ENCODE measurements at regions of chr14 and their contacts with region 1.

Region 1: DNA sequence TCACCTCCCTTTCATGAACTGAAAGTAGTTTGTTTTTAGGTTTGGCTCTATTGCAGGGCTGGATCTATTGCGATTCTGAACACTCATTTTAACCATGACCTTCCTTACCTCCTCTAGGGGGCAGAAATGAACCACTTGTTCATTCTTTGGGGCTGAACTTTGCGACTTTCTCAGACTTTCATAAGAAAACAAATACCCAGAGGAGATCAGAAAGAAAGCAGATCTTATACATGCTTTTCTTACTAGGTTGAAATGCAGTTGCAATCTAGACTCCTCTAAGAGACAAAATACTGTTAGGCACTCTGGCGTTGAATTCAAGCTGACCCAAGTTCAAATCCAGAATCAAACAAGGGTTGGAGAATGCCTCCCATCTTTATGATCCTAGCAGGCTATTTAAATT is 32.6 kb upstream of the PLEKHG3 start:
- DNase-seq: no peak
- ATAC-seq: peak; percentile 35 to 40
- H3K4me3 ChIP-seq: no peak overlapping the region
- H3K27ac ChIP-seq: no peak overlapping the region
- H3K4me1 ChIP-seq: no peaks in the 10 kb centered on the region
- H3K27me3 ChIP-seq: no peaks in the 10 kb centered on the region

Region 2: GRCh38 chr14:64510825-64511671 is 160.5 kb before region 1 on chr14:
- intact Hi-C with region 1: no loop called
- DNase-seq: peak in 2 of 3 donors; percentile 41 to 70
- ATAC-seq: peak in 1 of 2 donors; percentile 69
- H3K4me3 ChIP-seq: no peak overlapping the region
- H3K27ac ChIP-seq: no peak overlapping the region
- H3K4me1 ChIP-seq: peaks cover 2% of the 10 kb centered on the region
- H3K27me3 ChIP-seq: no peaks in the 10 kb centered on the region

Region 3: DNA sequence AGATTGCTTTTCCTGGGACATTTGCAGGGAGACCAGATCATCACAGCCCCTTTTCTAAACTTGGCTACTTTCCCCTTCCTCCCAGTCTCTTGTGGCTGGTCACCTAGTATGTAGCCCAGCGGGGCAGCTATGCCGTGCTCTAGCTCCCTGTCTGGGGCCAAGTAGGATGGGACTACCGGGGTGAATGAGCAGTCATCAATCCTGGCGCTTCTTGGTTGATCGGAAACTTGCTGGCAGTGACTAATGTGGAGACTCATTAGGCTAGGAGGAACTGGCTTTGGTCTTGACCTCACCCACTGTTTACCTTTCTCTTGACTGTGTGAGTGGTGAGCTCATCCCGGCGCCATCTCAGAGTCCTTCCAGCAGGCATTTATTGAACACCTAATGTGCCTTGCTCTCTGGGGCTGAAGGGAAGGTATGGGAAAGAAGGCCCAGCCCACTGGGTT is 48.6 kb after region 1 on chr14:
- intact Hi-C with region 1: no loop called
- DNase-seq: peak in 1 of 3 donors; percentile 39
- ATAC-seq: no peak
- H3K4me3 ChIP-seq: no peak overlapping the region
- H3K27ac ChIP-seq: no peak overlapping the region
- H3K4me1 ChIP-seq: peaks cover 50% of the 10 kb centered on the region
- H3K27me3 ChIP-seq: no peaks in the 10 kb centered on the region

Region 4: DNA sequence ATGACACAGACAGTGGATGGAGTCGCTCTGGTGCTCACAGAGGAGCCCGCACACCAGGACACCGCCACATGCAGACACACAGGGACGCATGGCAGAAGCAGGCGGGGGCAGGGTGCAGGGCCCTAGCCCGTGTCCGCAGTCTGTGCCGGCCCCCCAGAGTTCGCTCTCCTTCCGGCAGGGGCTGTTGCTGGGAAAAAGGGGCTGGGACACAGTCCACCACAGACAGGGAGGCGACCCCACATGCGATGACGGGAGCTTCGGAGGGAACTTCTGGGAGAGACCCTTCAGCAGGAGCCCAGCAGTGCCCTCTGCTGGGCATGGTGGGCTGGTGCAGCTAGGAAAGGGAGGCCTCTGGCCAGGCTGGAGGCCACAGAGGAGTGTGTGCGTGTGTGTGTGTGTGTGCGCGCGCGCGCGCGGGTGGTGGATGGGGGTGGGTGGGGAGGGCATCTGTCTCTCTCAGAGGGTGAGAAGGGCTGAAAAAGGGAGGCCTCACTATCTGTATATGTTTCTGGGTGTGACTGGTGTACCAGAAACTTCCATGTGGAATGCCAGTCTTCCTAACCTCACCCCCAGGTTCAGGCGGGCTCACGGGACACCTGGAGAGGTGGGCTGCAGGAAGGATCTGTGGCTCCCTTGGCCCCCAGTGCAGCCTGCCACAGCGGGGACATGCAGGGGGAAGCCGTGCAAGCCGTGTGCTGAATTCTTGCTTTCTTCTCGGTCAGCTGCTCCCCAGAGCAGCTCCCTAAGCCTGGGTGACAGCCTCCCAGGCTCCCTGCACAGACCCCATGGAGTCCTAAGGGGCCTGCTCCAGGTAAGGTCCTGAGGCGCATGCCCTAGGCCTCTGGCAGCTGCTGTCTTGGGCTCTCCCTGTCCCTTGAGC is 93.3 kb after region 1 on chr14:
- intact Hi-C with region 1: loop called (anchors 2 to 5 kb)
- DNase-seq: peak; percentile 75 to 91 (median 90)
- ATAC-seq: peak; percentile 62 to 71
- H3K4me3 ChIP-seq: no peak overlapping the region
- H3K27ac ChIP-seq: no peak overlapping the region
- H3K4me1 ChIP-seq: peaks cover 21% of the 10 kb centered on the region
- H3K27me3 ChIP-seq: no peaks in the 10 kb centered on the region

Region 5: DNA sequence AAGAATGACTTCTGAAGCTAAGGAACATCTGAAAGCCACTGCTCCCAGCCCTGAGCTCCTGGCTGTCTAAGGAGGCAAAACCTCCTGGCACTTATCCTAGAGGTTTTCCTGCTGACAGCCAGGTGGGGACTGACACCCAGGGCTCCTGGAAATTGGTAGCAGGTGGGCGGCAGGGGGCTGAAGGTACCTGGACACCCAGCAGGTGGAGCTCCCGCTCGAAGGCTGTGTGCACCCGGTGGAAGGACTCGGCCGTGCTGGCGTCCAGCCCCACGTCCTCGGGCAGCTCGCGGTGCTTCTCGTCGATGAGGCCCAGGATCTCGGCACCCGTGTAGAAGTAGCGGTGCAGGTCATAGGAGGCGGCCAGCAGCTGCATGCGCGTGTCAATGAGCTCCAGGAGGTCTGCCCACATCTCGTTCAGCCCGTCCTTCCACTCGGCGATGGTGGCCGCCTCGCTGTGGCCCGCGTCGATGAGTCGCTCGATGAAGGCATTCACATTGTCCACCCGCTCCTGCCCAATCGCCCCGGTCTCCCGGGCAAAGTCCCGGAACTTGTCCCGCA is 100.9 kb after region 1 on chr14:
- intact Hi-C with region 1: loop called in 1 of 4 experiments (anchors 5 kb)
- DNase-seq: no peak
- ATAC-seq: no peak
- H3K4me3 ChIP-seq: no peak overlapping the region
- H3K27ac ChIP-seq: no peak overlapping the region
- H3K4me1 ChIP-seq: no peaks in the 10 kb centered on the region
- H3K27me3 ChIP-seq: no peaks in the 10 kb centered on the region

Region 6: DNA sequence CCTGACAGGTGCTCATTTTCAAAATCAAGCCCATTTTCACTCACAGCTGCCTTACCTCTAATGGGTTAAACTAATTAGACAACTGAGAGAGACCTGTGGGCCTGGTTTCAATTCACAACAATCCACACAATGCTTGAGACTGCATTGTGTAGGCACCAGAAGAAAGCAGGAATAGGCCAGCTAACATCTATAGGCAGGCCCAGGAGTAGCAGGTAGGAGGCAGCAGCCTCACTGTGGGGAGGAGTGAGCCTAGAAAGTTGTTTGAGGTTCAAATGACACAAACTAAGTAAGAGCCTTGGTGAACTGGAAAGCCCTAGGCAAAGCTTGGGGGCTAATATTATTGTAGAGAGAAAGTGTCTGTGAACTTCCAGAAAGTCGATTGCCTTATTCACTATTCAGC is 1525.1 kb after region 1 on chr14:
- intact Hi-C with region 1: no loop called
- DNase-seq: no peak
- ATAC-seq: no peak
- H3K4me3 ChIP-seq: no peak overlapping the region
- H3K27ac ChIP-seq: no peak overlapping the region
- H3K4me1 ChIP-seq: no peaks in the 10 kb centered on the region
- H3K27me3 ChIP-seq: no peaks in the 10 kb centered on the region